Naive thymus-derived CD8-positive, alpha-beta T cell (primary cell): ENCODE measurements at regions of chr5 and their contacts with region 1.

Region 1: GRCh38 chr5:177351385-177352329 is at the start of gene LMAN2:
- DNase-seq: peak; percentile 76 to 96 (median 91)
- ATAC-seq: peak; percentile 98
- H3K4me3 Mint-ChIP-seq: peak within 1 kb of the TSS; percentile 95 to 100 (median 98)
- H3K27ac Mint-ChIP-seq: peak within 1 kb of the TSS; percentile 97 to 100 (median 100)
- H3K4me1 Mint-ChIP-seq: peaks cover 23 to 74% (median 70%) of the 10 kb centered on the region in 4 donors
- H3K27me3 Mint-ChIP-seq: no peaks in the 10 kb centered on the region
- polyA plus RNA-seq, gene LMAN2: 212 to 243 (median 242) TPM

Region 2: GRCh38 chr5:177303121-177303924 is 48.3 kb before region 1 on chr5 and contains the starts of genes PRELID1 and RAB24:
- POLR2A ChIA-PET with region 1: interaction called, 13 read pairs
- DNase-seq: peak; percentile 81 to 90 (median 87)
- ATAC-seq: peak; percentile 67 to 72
- H3K4me3 Mint-ChIP-seq: peak within 1 kb of the TSS; percentile 86 to 96 (median 92)
- H3K27ac Mint-ChIP-seq: peak within 1 kb of the TSS; percentile 80 to 99 (median 92)
- H3K4me1 Mint-ChIP-seq: peaks cover 34 to 77% (median 74%) of the 10 kb centered on the region in 4 donors
- H3K27me3 Mint-ChIP-seq: no peaks in the 10 kb centered on the region
- polyA plus RNA-seq, gene PRELID1: 163 to 204 (median 180) TPM
- polyA plus RNA-seq, gene RAB24: 20.8 to 26.9 (median 26.1) TPM

Region 3: DNA sequence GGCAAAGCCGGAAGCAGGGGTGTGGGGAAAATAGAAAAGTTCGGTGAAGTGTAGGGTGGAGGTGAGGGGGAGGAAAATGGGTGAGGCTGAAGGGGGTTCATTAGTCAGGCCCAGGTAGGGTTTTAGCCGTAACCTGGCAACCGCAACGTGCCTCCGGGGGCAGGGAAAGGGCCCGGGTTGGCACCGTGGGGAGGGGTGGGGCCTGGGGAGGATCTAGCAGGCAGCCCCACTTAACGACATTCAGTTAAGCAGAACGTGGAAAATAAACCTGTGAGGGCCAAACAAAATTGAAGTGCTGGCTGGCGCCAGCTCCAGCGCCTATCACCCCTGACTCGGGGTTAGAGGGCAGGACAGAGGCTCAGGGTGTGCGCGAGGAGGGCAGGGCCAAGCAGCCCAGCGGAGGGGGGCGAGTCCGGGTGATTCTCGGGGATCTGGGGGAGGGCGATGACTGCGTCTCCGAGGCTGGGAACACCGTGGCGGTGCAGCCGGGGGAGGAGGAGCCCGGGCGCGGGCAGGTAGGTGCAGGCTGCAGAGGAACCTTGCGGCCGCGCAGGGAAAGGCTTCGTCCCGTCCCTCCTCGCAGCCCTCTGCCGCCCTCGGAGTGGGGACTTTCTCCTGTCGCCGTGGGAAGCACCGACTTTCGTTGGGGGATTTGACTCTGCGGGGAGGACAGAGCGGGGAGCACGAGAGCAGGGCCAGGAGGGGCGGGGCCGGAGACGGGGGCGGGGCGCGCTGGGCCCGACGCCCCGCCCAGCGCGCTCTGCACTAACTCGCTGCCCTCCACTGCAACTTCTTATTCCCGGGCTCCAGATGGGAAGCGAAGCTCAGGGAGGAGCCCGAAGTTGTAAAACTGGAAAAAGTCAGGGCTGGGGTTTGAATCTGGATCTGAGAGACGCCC is 11.2 kb after region 1 on chr5:
- POLR2A ChIA-PET with region 1: interaction called, 247 read pairs
- DNase-seq: peak; percentile 36 to 78 (median 61)
- ATAC-seq: peak; percentile 67
- H3K4me3 Mint-ChIP-seq: peak overlapping the region; percentile 79 to 93 (median 88)
- H3K27ac Mint-ChIP-seq: peak overlapping the region; percentile 89 to 98 (median 94)
- H3K4me1 Mint-ChIP-seq: peaks cover 38 to 73% (median 72%) of the 10 kb centered on the region in 4 donors
- H3K27me3 Mint-ChIP-seq: no peaks in the 10 kb centered on the region